Heart left ventricle (tissue), 16 donors: ENCODE measurements at regions of chrX and their contacts with region 1.

Region 1: GRCh38 chrX:132740316-132741123 is 217.9 kb downstream of the HS6ST2 start:
- DNase-seq: no peak
- ATAC-seq: no peak
- H3K4me3 ChIP-seq: no peak overlapping the region
- H3K27ac ChIP-seq: no peak overlapping the region
- H3K4me1 ChIP-seq: no peaks in the 10 kb centered on the region
- H3K27me3 ChIP-seq: peaks cover 0 to 37% (median 0%) of the 10 kb centered on the region in 9 donors
- CTCF ChIP-seq: peak; percentile 25 to 60 (median 44)
- POLR2A ChIP-seq: no peak

Region 2: DNA sequence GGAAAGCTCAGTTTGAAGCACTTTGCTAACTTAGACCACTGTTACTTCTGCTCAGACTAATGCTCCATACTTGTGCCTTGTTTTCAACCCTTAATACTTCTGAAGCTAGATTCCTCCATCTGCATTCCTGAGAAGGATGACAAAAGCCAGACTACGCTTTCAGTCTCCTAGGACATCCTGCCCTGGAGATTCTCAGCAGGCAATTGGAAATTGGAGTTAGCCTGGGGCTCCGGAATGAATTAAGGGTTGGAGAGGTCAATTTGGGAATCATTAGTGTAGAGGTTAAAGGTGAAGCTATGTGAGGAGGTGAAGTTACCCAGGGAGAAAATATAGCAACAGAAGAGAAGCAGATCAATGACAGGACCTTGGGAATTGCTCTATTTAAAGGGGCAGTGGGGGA is 35.8 kb before region 1 on chrX:
- intact Hi-C with region 1: no loop called
- DNase-seq: no peak
- ATAC-seq: no peak
- H3K4me3 ChIP-seq: no peak overlapping the region
- H3K27ac ChIP-seq: no peak overlapping the region
- H3K4me1 ChIP-seq: no peaks in the 10 kb centered on the region
- H3K27me3 ChIP-seq: peaks cover 0 to 24% (median 0%) of the 10 kb centered on the region in 9 donors
- CTCF ChIP-seq: no peak
- POLR2A ChIP-seq: no peak

Region 3: DNA sequence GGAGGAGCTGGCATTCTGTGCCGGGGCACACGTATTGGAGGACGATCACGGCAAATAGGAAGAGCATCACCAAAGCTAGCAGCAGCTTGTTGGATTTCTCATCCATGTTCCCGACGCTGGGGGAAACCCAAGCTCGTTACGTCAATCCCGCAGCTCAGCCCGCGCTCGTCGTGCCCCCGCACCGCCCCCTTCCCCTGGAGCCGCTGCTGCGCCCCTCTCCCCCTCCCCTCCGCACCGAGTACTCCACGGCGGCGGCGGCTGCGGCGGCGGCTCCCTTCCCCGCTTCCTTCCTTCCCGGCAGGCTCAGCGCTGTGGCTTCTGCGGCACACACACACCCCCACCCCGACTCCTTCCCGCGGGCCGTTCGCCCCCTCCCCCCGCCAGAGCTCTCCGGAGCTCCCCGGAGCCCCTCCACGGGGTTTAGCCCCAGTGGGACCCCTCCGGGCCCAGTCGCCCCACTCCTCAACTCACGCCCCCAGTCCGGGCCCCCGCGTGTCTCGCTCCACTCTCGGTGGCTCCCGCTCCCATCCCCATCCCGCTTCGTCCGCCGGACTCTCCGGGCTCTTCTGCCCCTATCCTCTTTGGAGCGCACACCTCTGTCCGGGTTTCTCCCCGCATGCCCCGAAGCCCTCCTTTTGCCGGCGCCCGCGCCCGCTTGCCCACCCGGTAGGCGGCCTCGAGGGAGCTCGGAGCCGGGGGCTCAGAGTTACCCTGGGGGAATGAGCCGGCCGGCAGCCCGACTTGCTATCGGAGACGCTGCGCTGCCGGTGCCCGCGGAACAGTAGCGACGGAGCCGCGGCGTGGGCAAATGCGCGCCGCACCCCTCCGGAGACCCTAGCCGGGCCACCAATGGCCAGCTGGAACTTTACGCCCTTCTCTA is 216.9 kb after region 1 on chrX:
- intact Hi-C with region 1: loop called in 6 of 10 experiments (anchors 5 to 10 kb)
- DNase-seq: no peak
- ATAC-seq: peak in 1 of 4 donors; percentile 63
- H3K4me3 ChIP-seq: peak overlapping the region; percentile 14 to 55 (median 45)
- H3K27ac ChIP-seq: no peak overlapping the region
- H3K4me1 ChIP-seq: peaks cover 0 to 20% (median 2%) of the 10 kb centered on the region in 12 donors
- H3K27me3 ChIP-seq: peaks cover 0 to 68% (median 20%) of the 10 kb centered on the region in 9 donors
- CTCF ChIP-seq: no peak
- POLR2A ChIP-seq: no peak

Region 4: DNA sequence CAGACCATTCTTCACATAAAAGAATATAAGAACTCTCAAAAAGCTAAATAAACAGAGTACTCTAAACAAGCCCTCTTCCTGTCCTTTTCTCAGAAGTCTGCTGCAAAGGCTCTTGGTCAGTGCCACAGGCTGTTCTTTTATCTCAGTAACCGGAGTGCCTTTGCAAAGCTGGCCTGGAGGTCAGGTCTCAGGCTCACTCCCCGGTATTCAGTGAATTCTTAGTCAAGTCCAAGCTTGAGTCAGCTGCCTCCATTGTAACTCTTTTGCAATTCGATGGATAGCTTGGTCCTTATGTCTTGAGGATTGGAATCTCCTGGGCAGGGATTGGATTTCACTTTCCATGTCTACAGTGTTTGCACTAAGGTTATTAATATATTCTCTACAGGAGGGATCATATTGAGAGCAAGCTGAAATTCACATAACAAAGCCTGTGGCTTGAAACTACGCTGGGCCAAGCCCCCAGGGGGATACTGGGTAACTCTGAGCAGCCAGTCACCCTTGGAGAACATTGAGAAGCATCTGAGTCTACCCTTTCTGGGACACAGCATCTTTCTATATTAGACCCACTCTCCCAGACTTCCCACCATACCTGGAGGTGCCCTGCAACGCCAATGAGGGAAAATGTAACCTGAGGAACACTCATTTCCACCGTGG is 227.9 kb after region 1 on chrX:
- intact Hi-C with region 1: loop called in 1 of 10 experiments (anchors 10 kb)
- DNase-seq: no peak
- ATAC-seq: no peak
- H3K4me3 ChIP-seq: no peak overlapping the region
- H3K27ac ChIP-seq: no peak overlapping the region
- H3K4me1 ChIP-seq: no peaks in the 10 kb centered on the region
- H3K27me3 ChIP-seq: peaks cover 0 to 42% (median 0%) of the 10 kb centered on the region in 9 donors
- CTCF ChIP-seq: no peak
- POLR2A ChIP-seq: no peak

Region 5: DNA sequence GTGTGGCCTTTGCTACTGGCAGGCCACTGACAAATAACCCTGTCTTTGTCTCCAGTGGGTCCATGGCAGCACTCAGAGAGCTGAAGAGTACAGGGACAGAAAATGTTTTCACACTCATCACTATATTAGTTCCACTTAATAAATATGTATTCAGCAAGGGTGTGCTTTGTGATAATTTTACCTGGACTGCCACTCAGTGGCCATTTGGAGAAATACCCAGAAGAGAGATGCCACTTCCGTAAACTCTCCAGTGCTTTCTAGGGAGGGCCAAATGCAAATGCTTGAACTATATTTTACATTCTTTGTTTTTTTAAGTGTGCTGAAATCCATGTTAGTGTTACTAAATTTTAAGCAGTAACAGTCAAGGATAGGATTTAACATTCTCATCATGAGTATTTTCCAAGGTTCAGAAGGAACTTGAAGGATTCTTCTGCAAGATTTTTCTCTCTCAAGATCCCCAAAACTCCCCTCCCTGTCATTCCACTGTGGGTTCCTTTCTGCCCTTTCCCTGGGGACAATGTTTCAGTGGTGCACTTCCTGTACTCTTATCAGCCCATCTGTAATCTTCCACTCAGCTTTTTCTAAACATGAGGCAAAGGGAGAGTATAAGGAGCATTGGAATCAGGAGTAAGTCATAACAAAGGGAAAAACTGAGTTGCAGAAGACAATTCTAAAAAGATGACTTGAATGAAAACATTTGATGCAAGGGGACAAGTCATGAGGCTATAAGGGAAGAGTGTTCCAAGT is 431.6 kb after region 1 on chrX:
- intact Hi-C with region 1: loop called in 1 of 10 experiments (anchors 10 kb)
- DNase-seq: no peak
- ATAC-seq: no peak
- H3K4me3 ChIP-seq: no peak overlapping the region
- H3K27ac ChIP-seq: no peak overlapping the region
- H3K4me1 ChIP-seq: no peaks in the 10 kb centered on the region
- H3K27me3 ChIP-seq: peaks cover 0 to 22% (median 0%) of the 10 kb centered on the region in 9 donors
- CTCF ChIP-seq: peak in 8 of 12 donors; percentile 18 to 41 (median 28)
- POLR2A ChIP-seq: no peak